Right ventricle myocardium superior (tissue), 1 donor: ENCODE measurements at regions of chr2 and their contacts with region 1.

Region 1: GRCh38 chr2:127591221-127591923 is 54.6 kb upstream of the GPR17 start:
- DNase-seq: peak; percentile 81
- ATAC-seq: peak; percentile 95

Region 2: DNA sequence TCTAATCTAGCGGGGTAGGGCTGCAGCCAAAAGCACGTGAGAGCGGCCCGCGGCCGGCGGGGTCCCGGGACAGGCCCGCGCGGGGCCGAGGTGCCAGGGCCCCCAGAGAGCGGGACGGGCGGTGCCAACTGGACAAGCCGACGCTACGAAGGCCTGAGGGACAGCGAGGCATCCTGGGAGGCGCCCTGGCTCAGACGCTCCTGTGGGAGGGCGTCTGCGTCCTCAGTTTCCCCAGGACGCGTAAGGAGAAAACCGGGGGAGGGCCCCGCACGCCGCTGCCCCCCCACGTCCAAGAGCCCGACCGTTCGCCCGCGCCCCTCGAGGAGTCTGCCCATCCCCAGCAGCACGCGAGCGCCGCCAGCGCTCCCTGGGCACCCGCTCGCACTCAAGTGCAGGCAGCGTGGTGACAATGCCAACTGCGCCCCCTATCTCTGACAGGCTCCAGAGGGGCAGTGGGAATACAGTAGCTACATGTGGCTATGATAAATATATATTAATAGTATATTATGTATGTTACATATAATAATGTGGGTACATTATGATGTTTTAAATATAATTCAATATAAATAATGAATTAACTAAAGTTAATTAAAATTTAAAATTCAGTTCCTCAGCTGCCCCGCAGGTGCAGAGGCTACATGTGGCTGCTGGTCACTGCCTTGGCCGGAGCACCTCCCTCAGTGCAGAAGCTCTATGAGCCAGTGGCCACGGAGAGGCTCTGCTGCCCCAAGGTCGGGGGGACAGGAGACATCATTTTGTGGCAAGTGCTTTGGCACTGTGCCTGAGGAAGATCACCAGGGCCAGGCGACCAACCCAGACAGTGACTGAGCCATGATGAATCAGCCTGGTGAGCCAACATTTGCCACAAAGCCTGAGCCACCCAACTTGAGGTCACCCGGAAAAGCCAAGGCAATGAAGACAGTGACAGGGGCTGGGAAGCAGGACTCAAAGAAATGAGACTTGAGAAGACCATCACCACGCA is 104.4 kb after region 1 on chr2:
- intact Hi-C with region 1: loop called (anchors 10 kb)
- DNase-seq: peak; percentile 60
- ATAC-seq: peak; percentile 79